Left cardiac atrium (tissue), 4 donors: ENCODE measurements at regions of chr7 and their contacts with region 1.

Region 1: GRCh38 chr7:39113360-39113759 is 135.7 kb downstream of the POU6F2 start:
- DNase-seq: no peak
- ATAC-seq: no peak

Region 2: DNA sequence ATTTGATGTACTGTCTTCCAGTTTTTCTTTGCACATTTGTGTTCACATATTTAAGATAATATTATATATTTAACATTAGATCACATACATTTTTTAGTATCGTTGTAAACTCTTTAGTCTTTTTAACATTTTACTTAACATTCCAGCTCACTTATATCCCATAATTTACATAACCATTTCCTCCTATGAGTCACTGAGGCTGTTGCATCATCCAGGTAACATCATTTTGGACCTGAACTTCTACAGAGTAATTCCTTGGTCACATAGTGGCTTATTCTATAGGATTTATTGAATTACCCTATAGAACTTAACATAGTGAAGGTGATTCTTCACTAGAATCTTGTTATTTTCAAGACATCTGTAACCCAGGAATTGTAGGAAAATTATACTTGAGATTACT is 58.8 kb after region 1 on chr7:
- intact Hi-C with region 1: loop called in 1 of 2 experiments (anchors 10 kb)
- DNase-seq: no peak
- ATAC-seq: no peak